Gastrocnemius medialis (tissue), 4 donors: ENCODE measurements at regions of chr3 and their contacts with region 1.

Region 1: GRCh38 chr3:172039436-172040077 is at the start of gene FNDC3B:
- DNase-seq: peak; percentile 92
- ATAC-seq: peak; percentile 84 to 85
- H3K4me3 ChIP-seq: peak within 1 kb of the TSS; percentile 94 to 100 (median 98)
- H3K27ac ChIP-seq: peak within 1 kb of the TSS; percentile 99 to 100 (median 99)
- H3K4me1 ChIP-seq: peaks cover 27 to 35% of the 10 kb centered on the region in 2 donors
- H3K27me3 ChIP-seq: no peaks in the 10 kb centered on the region
- CTCF ChIP-seq: no peak
- POLR2A ChIP-seq: peak; percentile 87 to 99
- total RNA-seq, gene FNDC3B: 42.5 to 110 (median 74.2) TPM

Region 2: GRCh38 chr3:172074586-172074985 is 35.0 kb after region 1 on chr3:
- in situ Hi-C with region 1: no loop called
- intact Hi-C with region 1: loop called (anchors 2 kb)
- DNase-seq: peak; percentile 70 to 72
- ATAC-seq: peak; percentile 86 to 87
- H3K4me3 ChIP-seq: peak overlapping the region in 1 of 4 donors; percentile 27
- H3K27ac ChIP-seq: peak overlapping the region; percentile 54 to 64 (median 62)
- H3K4me1 ChIP-seq: peaks cover 61 to 73% of the 10 kb centered on the region in 2 donors
- H3K27me3 ChIP-seq: no peaks in the 10 kb centered on the region
- CTCF ChIP-seq: no peak
- POLR2A ChIP-seq: no peak

Region 3: GRCh38 chr3:172129870-172130683 is 90.5 kb after region 1 on chr3:
- in situ Hi-C with region 1: no loop called
- intact Hi-C with region 1: loop called (anchors 2 kb)
- DNase-seq: peak; percentile 97 to 99
- ATAC-seq: peak; percentile 83 to 87
- H3K4me3 ChIP-seq: peak overlapping the region; percentile 14 to 18 (median 18)
- H3K27ac ChIP-seq: peak overlapping the region; percentile 91 to 99 (median 94)
- H3K4me1 ChIP-seq: peaks cover 87 to 88% of the 10 kb centered on the region in 2 donors
- H3K27me3 ChIP-seq: no peaks in the 10 kb centered on the region
- CTCF ChIP-seq: no peak
- POLR2A ChIP-seq: peak in 1 of 2 donors; percentile 43

Region 4: DNA sequence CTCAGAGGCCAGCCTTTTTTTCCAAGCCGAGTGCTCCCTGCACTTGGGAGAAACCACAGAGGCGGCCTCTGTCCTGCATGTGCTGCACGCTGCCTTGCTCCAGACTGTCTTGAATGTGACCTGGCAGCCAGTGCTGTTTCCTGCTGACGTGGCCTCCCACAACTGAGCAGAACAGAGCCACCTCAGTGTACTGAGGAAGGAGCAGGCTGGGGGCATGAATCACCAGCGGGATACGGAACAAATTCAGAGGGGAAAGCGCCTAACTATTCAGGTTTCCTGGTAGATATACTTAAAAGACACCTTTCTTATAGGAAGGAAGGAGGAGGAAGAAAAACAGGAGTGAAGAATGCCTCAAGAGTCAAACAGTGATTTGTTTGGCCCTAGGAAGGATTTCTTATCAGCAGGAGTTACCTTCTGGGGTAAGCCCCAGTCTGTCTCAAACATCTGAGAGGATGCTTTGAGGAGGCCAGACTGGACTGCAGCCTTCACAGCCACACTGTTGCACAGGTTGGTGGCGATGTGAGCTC is 113.8 kb after region 1 on chr3:
- in situ Hi-C with region 1: no loop called
- intact Hi-C with region 1: no loop called
- DNase-seq: peak; percentile 94 to 95
- ATAC-seq: peak; percentile 96
- H3K4me3 ChIP-seq: peak overlapping the region in 2 of 4 donors; percentile 6 to 7
- H3K27ac ChIP-seq: peak overlapping the region; percentile 83 to 91 (median 84)
- H3K4me1 ChIP-seq: peaks cover 73 to 74% of the 10 kb centered on the region in 2 donors
- H3K27me3 ChIP-seq: no peaks in the 10 kb centered on the region
- CTCF ChIP-seq: no peak
- POLR2A ChIP-seq: peak; percentile 51 to 81

Region 5: GRCh38 chr3:172201136-172201869 is 161.7 kb after region 1 on chr3:
- in situ Hi-C with region 1: no loop called
- intact Hi-C with region 1: loop called (anchors 5 kb)
- DNase-seq: peak; percentile 31 to 67
- ATAC-seq: peak; percentile 50 to 76
- H3K4me3 ChIP-seq: peak overlapping the region in 1 of 4 donors; percentile 15
- H3K27ac ChIP-seq: peak overlapping the region; percentile 20 to 70 (median 61)
- H3K4me1 ChIP-seq: peaks cover 38 to 47% of the 10 kb centered on the region in 2 donors
- H3K27me3 ChIP-seq: no peaks in the 10 kb centered on the region
- CTCF ChIP-seq: no peak
- POLR2A ChIP-seq: no peak

Region 6: GRCh38 chr3:172317984-172318383 is 278.4 kb after region 1 on chr3:
- in situ Hi-C with region 1: loop called in 3 of 4 experiments (anchors 10 to 25 kb)
- intact Hi-C with region 1: no loop called
- DNase-seq: peak in 1 of 2 donors; percentile 41
- ATAC-seq: peak; percentile 44 to 48
- H3K4me3 ChIP-seq: no peak overlapping the region
- H3K27ac ChIP-seq: peak overlapping the region; percentile 79 to 88 (median 82)
- H3K4me1 ChIP-seq: peaks cover 92 to 96% of the 10 kb centered on the region in 2 donors
- H3K27me3 ChIP-seq: no peaks in the 10 kb centered on the region
- CTCF ChIP-seq: no peak
- POLR2A ChIP-seq: no peak

Region 7: DNA sequence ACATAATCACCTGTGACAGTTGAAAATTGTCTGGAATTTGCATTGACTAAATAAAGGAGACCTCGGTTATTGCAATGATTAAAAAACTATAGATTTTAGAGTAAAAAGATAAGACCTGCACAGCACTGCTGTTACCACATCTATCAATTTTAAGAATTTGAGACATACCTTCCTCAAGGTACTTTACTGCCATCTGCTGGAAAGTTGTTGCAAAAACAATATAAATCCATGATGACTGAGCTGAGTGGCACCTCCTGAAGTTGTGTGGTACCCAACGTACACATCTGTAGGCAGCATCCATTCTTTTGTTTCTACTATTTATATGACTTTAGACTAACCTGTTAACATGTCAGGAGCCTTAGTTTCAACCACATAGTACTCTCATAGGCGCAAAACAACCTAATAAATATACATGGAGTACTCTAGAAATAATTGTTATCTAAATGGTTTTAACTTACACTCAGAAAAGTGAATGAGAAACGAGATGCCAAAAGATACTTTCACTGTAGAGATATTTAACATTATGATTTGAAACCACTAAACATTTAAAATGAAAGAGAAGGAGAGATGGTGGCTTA is 302.0 kb after region 1 on chr3:
- in situ Hi-C with region 1: loop called in 1 of 4 experiments (anchors 10 kb)
- intact Hi-C with region 1: loop called (anchors 2 kb)
- DNase-seq: no peak
- ATAC-seq: peak; percentile 59 to 64
- H3K4me3 ChIP-seq: no peak overlapping the region
- H3K27ac ChIP-seq: no peak overlapping the region
- H3K4me1 ChIP-seq: no peaks in the 10 kb centered on the region
- H3K27me3 ChIP-seq: no peaks in the 10 kb centered on the region
- CTCF ChIP-seq: peak; percentile 60 to 80 (median 66)
- POLR2A ChIP-seq: no peak